ENCODE measurements at regions of chrX and their contacts with region 1.

Region 1: DNA sequence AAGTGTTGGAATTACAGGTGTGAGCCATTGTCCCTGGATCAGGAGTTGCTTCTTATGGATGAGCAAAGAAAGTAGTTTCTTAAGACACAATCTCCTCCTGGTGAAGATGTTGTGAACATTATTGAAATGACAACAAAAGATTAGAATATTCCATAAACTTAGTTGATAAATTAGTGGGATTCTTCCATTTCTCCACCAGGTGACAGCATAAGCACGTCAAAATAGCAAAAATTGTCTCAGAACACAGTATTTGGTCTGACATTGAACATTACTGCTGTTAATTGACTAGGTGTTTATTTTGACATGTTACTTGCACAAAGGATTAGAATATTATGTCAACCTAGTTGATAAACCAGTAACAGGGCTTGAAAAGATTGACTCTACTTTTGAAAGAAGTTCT is 21.6 kb downstream of the CLDN34 start:
- DNase-seq: no peak
- H3K4me3 ChIP-seq: no peak overlapping the region
- H3K27ac ChIP-seq: no peak overlapping the region
- H3K27me3 ChIP-seq: peaks cover 0 to 37% (median 2%) of the 10 kb centered on the region in 45 donors
- CTCF ChIP-seq: peak in 52 of 56 donors; percentile 21 to 65 (median 40)

Region 2: DNA sequence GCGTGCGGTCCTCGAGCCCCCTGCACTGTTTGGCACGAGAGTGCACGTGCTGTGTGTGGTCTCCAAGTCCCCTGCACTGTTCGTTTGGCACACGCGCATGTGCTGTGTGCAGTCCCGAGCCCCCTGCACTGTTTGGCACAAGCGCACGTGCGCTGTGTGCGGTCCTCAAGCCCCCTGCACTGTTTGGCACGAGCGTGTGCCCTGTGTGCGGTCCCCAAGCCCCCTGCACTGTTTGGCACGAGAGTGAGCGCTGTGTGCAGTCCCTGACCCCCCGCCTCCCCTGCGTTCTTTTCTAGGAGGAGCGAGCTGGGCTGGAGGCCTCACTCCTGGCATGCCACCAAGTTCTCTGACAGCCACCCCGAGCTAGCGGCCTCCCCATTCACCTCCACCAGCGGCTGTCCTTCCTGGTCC is 98.1 kb before region 1 on chrX:
- intact Hi-C with region 1: loop called in 1 of 2 experiments (anchors 5 kb)
- DNase-seq: no peak
- H3K4me3 ChIP-seq: peak overlapping the region in 6 of 59 donors; percentile 2 to 38 (median 11)
- H3K27ac ChIP-seq: no peak overlapping the region
- H3K27me3 ChIP-seq: peaks cover 0 to 68% (median 4%) of the 10 kb centered on the region in 45 donors
- CTCF ChIP-seq: no peak